HEK293 (cell line): ENCODE measurements at regions of chr5 and their contacts with region 1.

Region 1: GRCh38 chr5:128498844-128499455 is 39.1 kb downstream of the FBN2 start:
- H3K4me3 ChIP-seq: no peak overlapping the region
- H3K27ac ChIP-seq: no peak overlapping the region
- H3K4me1 ChIP-seq: no peaks in the 10 kb centered on the region
- CTCF ChIP-seq: 0 out of 2 replicates have a peak, but pooled peaks have one; percentile 13

Region 2: DNA sequence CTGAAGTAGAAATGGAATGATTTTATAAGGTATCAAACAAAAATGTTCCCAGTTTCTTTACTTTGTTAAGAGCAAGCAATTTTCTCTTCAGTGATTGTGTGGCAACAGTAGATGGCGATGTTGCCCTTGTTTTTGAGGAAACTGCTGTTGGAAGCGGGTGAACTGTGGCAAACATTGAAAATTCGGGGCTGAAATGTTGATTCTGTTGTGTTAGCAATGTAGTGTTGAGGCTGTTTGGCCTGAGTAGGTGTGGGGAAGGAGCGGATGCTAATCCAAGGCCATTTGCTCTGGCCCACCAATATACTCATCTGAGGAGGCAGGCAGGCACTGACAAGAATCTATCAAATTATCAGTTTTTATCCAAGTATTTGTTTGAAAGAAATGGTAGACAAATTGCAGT is 285.6 kb before region 1 on chr5:
- CTCF ChIA-PET with region 1: interaction called, 39 read pairs
- POLR2A ChIA-PET with region 1: no interaction called
- H3K4me3 ChIP-seq: no peak overlapping the region
- H3K27ac ChIP-seq: no peak overlapping the region
- H3K4me1 ChIP-seq: no peaks in the 10 kb centered on the region
- CTCF ChIP-seq: peak; percentile 64

Region 3: DNA sequence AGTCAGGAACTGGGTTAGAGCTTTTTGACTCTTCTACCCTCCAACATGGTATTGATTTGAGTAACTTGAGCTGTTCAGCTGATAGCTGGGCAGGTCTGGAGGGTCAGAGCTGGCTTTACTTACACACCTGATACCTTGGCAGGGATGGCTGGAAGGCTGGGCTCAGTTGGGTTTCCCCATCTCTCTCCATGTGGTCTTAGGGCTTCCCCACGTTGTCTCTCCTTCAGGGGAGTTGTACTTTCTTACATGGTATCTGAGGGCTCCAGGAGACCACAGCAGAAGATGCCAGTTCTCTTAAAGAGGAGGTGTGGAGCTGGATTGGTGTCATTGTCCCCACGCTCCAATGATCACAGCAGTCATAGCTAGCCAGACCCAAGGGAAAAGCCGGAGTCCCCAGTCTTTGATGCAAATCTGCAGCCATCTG is 621.2 kb after region 1 on chr5:
- CTCF ChIA-PET with region 1: no interaction called
- POLR2A ChIA-PET with region 1: no interaction called
- H3K4me3 ChIP-seq: no peak overlapping the region
- H3K27ac ChIP-seq: no peak overlapping the region
- H3K4me1 ChIP-seq: 0 out of 2 replicates have a peak, but pooled peaks cover 3% of the 10 kb centered on the region
- CTCF ChIP-seq: no peak